ENCODE measurements at regions of chr11 and their contacts with region 1.

Region 1: GRCh38 chr11:101914738-101915426 is at the start of gene CEP126:
- DNase-seq: peak; percentile 99
- H3K4me3 ChIP-seq: peak within 1 kb of the TSS; percentile 13 to 81 (median 73)
- H3K27ac ChIP-seq: peak within 1 kb of the TSS; percentile 100
- H3K4me1 ChIP-seq: peaks cover 42% of the 10 kb centered on the region
- H3K27me3 ChIP-seq: no peaks in the 10 kb centered on the region
- CTCF ChIP-seq: peak; percentile 32 to 59
- POLR2A ChIP-seq: peak; percentile 79
- total RNA-seq, gene CEP126: 5.8 and 9.1 TPM in 2 replicates

Region 2: GRCh38 chr11:101586965-101587364 is 327.9 kb before region 1 on chr11:
- CTCF ChIA-PET with region 1: no interaction called
- POLR2A ChIA-PET with region 1: no interaction called
- dilution Hi-C with region 1: no loop called
- intact Hi-C with region 1: no loop called
- DNase-seq: no peak
- H3K4me3 ChIP-seq: no peak overlapping the region
- H3K27ac ChIP-seq: no peak overlapping the region
- H3K4me1 ChIP-seq: no peaks in the 10 kb centered on the region
- H3K27me3 ChIP-seq: peaks cover 9 to 10% of the 10 kb centered on the region in 2 experiments
- CTCF ChIP-seq: no peak
- POLR2A ChIP-seq: no peak

Region 3: GRCh38 chr11:101738452-101738851 is 176.4 kb before region 1 on chr11:
- CTCF ChIA-PET with region 1: no interaction called
- POLR2A ChIA-PET with region 1: no interaction called
- dilution Hi-C with region 1: no loop called
- intact Hi-C with region 1: no loop called
- DNase-seq: no peak
- H3K4me3 ChIP-seq: no peak overlapping the region
- H3K27ac ChIP-seq: no peak overlapping the region
- H3K4me1 ChIP-seq: no peaks in the 10 kb centered on the region
- H3K27me3 ChIP-seq: no peaks in the 10 kb centered on the region
- CTCF ChIP-seq: no peak
- POLR2A ChIP-seq: no peak

Region 4: DNA sequence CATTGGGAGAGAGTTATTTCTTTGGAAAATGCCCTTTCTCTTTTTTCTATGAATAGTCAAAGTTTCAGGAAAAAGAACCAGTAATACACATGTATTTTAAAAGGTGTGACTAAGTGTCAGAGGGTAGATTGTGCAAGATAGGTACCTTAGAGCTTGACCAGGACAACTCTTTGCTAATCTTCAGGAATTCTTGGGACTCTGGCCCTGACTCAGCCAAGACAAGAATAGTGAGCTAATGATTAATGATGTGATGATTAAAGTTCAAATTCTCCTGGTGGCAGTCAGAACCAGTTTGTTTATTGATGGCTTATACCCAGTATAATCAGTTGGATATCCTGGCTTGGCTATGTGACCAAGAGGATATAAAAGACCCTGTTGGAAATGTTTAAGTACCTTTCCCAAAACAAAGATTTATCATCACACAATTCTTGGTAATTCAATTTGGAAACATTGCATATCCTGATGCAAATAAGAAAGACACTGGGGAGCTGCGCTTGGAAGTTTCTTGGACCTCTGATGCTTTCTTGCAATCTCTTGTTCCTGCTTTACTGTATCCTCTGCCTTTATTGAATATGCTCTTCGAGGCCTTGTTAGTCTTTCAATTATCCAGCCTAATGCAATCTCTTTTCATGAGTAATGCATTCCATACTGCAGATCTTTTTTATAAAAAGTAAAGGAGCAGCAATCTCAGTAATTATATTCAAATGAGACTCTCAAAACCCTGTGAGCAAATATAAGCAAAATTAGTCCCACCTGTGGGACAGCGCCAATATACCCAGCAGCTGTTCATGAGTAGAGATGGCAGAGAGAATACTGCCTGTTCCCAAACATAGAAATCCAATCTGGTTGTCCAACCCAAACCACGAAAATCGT is 48.0 kb before region 1 on chr11:
- CTCF ChIA-PET with region 1: interaction called, 43 read pairs
- POLR2A ChIA-PET with region 1: interaction called, 7 read pairs
- dilution Hi-C with region 1: no loop called
- intact Hi-C with region 1: loop called (anchors 1 kb)
- DNase-seq: peak; percentile 29
- H3K4me3 ChIP-seq: no peak overlapping the region
- H3K27ac ChIP-seq: no peak overlapping the region
- H3K4me1 ChIP-seq: peaks cover 58% of the 10 kb centered on the region
- H3K27me3 ChIP-seq: no peaks in the 10 kb centered on the region
- CTCF ChIP-seq: no peak
- POLR2A ChIP-seq: no peak

Region 5: GRCh38 chr11:102007567-102008437 is 92.9 kb after region 1 on chr11:
- CTCF ChIA-PET with region 1: interaction called, 51 read pairs
- POLR2A ChIA-PET with region 1: no interaction called
- dilution Hi-C with region 1: no loop called
- intact Hi-C with region 1: loop called (anchors 1 kb)
- DNase-seq: peak; percentile 78
- H3K4me3 ChIP-seq: no peak overlapping the region
- H3K27ac ChIP-seq: no peak overlapping the region
- H3K4me1 ChIP-seq: peaks cover 15% of the 10 kb centered on the region
- H3K27me3 ChIP-seq: no peaks in the 10 kb centered on the region
- CTCF ChIP-seq: peak; percentile 7 to 15
- POLR2A ChIP-seq: peak; percentile 17

Region 6: GRCh38 chr11:102119997-102120396 is 205.1 kb after region 1 on chr11:
- CTCF ChIA-PET with region 1: no interaction called
- POLR2A ChIA-PET with region 1: no interaction called
- dilution Hi-C with region 1: no loop called
- intact Hi-C with region 1: no loop called
- DNase-seq: no peak
- H3K4me3 ChIP-seq: no peak overlapping the region
- H3K27ac ChIP-seq: no peak overlapping the region
- H3K4me1 ChIP-seq: peaks cover 8% of the 10 kb centered on the region
- H3K27me3 ChIP-seq: peaks cover 6 to 36% of the 10 kb centered on the region in 2 experiments
- CTCF ChIP-seq: no peak
- POLR2A ChIP-seq: no peak

Region 7: DNA sequence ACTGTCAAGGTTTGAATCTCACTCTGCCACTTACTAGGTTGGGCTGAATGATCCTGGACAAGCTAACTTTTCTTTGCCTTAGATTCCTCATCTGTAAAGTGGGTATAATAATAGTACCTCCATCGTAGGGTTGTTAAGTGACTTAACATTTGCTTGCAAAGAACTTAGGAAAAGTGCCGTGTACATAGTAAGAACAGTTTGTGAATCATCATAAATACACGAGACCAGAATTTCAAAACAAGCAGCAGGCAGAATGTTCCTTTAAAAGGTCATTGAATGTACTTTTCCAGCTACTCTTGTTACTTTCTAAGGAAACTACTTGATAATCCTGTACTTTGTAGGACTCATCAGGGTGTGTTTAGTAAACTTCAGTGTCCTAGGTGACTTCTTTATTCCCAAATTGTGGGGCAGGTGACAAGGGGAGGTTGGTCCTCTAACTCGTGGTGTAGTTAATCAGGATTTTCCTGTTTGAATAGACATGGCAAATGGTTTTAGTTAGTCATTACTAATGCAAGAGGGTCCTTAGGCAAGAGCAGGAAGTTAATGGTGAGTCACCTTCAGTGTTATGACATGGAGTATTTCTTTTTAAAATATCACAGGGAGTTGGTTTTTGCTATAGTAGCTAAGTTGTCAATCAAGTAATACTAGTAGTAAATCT is 263.2 kb after region 1 on chr11:
- CTCF ChIA-PET with region 1: no interaction called
- POLR2A ChIA-PET with region 1: no interaction called
- dilution Hi-C with region 1: no loop called
- intact Hi-C with region 1: loop called (anchors 2 kb)
- DNase-seq: peak; percentile 88
- H3K4me3 ChIP-seq: no peak overlapping the region
- H3K27ac ChIP-seq: peak overlapping the region; percentile 74
- H3K4me1 ChIP-seq: peaks cover 12% of the 10 kb centered on the region
- H3K27me3 ChIP-seq: no peaks in the 10 kb centered on the region
- CTCF ChIP-seq: no peak
- POLR2A ChIP-seq: no peak

Region 8: GRCh38 chr11:102500829-102501228 is 585.9 kb after region 1 on chr11:
- CTCF ChIA-PET with region 1: no interaction called
- POLR2A ChIA-PET with region 1: no interaction called
- dilution Hi-C with region 1: no loop called
- intact Hi-C with region 1: no loop called
- DNase-seq: no peak
- H3K4me3 ChIP-seq: no peak overlapping the region
- H3K27ac ChIP-seq: no peak overlapping the region
- H3K4me1 ChIP-seq: no peaks in the 10 kb centered on the region
- H3K27me3 ChIP-seq: peaks cover 0 to 2% of the 10 kb centered on the region in 2 experiments
- CTCF ChIP-seq: no peak
- POLR2A ChIP-seq: no peak

Region 9: DNA sequence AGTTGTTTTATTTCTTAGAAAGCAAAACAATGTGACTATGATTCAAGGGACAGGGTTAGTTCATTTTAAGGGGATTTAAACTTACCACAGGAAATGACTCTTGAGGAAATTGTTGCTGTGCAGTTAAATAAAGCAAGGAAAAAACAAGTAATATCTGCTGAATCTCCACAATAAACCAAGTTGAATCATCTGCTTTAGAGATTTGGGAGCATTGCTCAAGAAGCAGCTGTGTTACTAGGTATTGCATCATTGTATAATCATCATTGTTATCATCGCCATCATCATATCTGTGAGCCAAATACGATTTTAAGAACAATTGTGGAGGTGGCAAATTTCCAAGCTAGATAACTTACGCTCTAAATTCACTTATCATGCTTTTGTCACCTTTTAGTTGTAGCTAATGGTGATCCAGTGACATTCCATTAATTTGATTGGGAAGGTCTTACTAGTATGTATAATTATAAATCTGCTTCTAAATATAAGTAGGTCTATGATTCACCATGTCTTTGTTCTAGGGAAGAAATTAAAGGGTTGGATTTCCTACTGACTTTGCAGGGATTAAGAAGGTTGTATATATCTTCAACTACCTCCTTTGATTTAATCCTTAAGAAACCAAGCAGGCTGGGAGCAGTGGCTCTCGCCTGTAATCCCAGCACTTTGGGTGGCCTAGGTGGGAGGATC is 845.6 kb after region 1 on chr11:
- CTCF ChIA-PET with region 1: no interaction called
- POLR2A ChIA-PET with region 1: no interaction called
- dilution Hi-C with region 1: no loop called
- intact Hi-C with region 1: loop called (anchors 10 kb)
- DNase-seq: peak; percentile 96
- H3K4me3 ChIP-seq: no peak overlapping the region
- H3K27ac ChIP-seq: peak overlapping the region; percentile 88
- H3K4me1 ChIP-seq: peaks cover 50% of the 10 kb centered on the region
- H3K27me3 ChIP-seq: peaks cover 0 to 3% of the 10 kb centered on the region in 2 experiments
- CTCF ChIP-seq: no peak
- POLR2A ChIP-seq: peak; percentile 41